ENCODE measurements at regions of chr5 and their contacts with region 1.

Region 1: GRCh38 chr5:93899026-93899600 is 157.7 kb upstream of the POU5F2 start:
- DNase-seq: no peak
- H3K4me3 ChIP-seq: no peak overlapping the region
- H3K27ac ChIP-seq: no peak overlapping the region
- H3K27me3 ChIP-seq: no peaks in the 10 kb centered on the region
- CTCF ChIP-seq: peak; percentile 52

Region 2: GRCh38 chr5:93886917-93887361 is 12.2 kb before region 1 on chr5:
- CTCF ChIA-PET with region 1: interaction called, 12 read pairs
- POLR2A ChIA-PET with region 1: no interaction called
- DNase-seq: no peak
- H3K4me3 ChIP-seq: no peak overlapping the region
- H3K27ac ChIP-seq: no peak overlapping the region
- H3K27me3 ChIP-seq: no peaks in the 10 kb centered on the region
- CTCF ChIP-seq: no peak

Region 3: GRCh38 chr5:93911609-93912008 is 12.5 kb after region 1 on chr5:
- CTCF ChIA-PET with region 1: interaction called, 10 read pairs
- POLR2A ChIA-PET with region 1: no interaction called
- DNase-seq: no peak
- H3K4me3 ChIP-seq: no peak overlapping the region
- H3K27ac ChIP-seq: no peak overlapping the region
- H3K27me3 ChIP-seq: no peaks in the 10 kb centered on the region
- CTCF ChIP-seq: no peak

Region 4: DNA sequence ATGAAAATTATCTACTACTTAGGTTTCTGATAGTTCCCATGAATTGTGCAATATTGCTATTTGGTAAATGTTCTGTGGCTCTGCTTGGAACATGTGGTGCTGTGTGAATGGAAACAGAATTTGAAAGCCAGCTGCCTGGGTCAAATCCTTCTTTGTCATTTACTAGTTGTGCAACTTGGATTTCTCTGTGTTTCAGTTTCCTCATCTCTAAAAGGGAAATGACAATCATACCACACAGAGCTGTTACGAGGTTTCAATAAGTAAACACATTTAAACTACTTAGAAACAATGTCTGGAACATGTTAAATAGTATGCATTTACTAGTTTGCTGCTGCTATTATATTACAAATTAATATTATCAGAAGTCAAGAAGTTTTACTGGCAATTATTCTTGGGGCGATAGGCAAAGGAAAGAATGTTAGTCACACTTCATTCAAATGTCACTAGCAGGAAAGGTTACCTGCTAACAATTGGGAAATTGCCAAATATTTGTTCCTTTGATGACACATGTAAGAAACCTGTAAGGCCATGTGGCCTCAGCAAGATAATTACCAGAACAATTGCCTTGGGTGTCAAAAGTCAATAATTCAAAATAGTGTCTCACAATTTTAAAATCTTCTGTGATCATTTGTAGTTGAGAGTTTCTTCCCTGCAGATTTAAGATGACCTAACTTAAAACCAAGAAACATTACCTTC is 534.5 kb after region 1 on chr5:
- CTCF ChIA-PET with region 1: no interaction called
- POLR2A ChIA-PET with region 1: no interaction called
- DNase-seq: peak; percentile 10
- H3K4me3 ChIP-seq: no peak overlapping the region
- H3K27ac ChIP-seq: no peak overlapping the region
- H3K27me3 ChIP-seq: no peaks in the 10 kb centered on the region
- CTCF ChIP-seq: no peak